Dorsolateral prefrontal cortex (tissue), 120 donors: ENCODE measurements at regions of chr21 and their contacts with region 1.

Region 1: DNA sequence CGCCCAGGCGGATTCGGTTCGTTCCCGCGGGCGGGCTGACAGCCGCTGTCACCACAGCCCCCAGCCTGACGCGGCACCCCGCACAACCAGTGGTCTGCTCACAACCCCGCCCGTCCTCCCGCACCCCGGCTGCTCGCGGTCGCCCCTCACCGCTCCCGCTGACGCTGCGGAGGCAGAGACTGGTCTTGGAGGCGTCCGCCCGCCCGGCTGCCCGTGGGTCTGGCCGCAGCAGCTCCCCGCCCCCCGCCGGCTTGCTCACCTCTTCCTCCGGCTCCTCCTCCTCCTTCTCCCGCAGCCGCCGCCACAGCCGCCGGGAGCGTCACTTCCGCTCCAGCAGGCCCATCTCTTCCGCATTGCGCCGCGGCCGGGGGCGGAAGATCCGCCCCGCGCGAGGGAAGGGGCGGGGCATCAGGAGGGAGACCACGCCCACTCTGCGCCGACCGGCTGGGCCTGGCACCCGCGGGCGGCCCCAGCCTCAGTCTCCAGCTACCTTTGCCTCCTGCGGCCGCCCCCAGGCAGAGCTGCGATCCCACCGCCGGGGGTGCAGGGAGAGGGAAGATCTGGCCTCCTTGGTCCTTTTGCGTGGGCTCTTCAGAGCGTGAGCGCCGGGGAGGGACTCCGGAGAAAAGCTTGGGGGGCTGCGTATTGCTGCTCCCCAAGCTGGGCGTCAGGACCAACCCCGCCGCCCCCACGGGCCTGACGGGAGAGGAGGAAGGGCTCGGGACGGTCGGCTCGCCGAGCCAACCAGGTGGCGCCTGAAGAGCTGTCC is at the start of gene SYNJ1:
- DNase-seq: peak; percentile 85 to 98 (median 93)
- H3K4me3 ChIP-seq: peak within 1 kb of the TSS; percentile 69 to 100 (median 96)
- H3K27ac ChIP-seq: peak within 1 kb of the TSS; percentile 63 to 98 (median 92)
- H3K27me3 ChIP-seq: no peaks in the 10 kb centered on the region
- CTCF ChIP-seq: peak in 21 of 56 donors; percentile 3 to 47 (median 20)
- total RNA-seq, gene SYNJ1: 60.7 to 224 (median 158) TPM

Region 2: DNA sequence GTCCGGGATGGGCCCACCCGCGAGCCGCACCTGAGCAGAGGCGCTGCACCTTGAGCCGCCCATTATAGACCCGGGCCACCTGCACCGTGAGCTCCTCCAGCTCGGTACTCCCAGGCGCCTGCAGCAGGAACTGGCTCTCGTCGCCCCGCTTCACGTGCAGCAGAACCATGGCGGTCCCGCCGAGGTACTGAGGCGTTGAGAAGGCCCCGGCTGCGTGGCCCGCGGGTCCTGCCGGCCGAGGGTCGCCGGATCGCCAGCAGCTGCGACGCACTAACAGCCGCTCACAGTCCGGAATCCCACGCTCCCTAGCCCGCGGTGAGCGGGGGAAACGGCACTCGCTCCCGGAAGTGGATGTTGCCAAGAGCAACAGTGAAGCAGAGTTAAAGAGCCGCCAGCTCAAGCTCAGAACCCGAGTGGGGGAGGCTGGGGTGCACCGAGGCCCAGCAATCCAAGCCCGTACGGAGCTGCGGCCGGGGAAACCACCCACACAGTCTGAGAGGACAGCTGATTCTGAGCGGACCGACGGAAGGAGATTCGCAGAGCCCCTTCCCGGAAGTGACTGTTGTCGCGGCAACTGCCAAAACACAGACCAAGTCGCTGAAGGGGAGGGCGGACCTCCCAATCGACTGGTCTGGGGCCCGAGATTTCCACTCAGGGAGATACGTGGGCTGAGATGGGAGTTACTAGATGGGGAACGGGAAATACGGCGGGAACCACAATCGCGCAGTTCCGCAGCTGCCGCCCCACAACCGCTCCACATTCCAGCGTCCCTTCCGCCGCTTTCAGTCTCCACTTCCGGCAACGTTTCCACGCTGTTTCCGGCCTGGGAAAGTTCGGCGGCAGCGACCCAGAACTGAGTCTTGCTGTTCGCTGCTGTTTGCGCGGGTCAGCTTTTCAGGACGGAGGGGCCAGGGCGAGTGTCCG is 115.5 kb before region 1 on chr21 and contains the start of gene CFAP298:
- intact Hi-C with region 1: loop called in 1 of 2 experiments (anchors 10 kb)
- DNase-seq: peak; percentile 75 to 94 (median 90)
- H3K4me3 ChIP-seq: peak within 1 kb of the TSS; percentile 64 to 99 (median 94)
- H3K27ac ChIP-seq: peak within 1 kb of the TSS; percentile 14 to 98 (median 90)
- H3K27me3 ChIP-seq: no peaks in the 10 kb centered on the region
- CTCF ChIP-seq: peak in 13 of 56 donors; percentile 3 to 39 (median 22)
- total RNA-seq, gene CFAP298: 25.7 to 54.3 (median 36.0) TPM

Region 3: DNA sequence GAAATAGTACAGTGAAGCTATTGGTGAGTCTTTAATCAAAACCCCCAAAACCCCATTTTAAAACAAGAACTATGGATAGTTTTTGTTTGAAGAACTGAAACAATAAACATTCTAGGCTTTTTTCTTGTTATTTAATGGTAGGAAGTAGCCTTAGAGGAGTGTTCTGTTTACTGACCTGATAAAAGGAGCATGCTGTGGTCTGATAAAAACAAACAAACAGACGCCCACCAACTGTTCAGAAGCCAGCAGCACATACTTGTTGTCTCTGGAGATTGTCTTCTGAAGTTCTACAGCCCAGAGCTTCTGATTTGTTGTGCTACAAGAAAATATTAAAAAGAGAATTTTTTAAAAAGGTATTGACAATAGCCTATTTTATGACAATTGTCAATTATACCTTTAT is 61.6 kb before region 1 on chr21:
- intact Hi-C with region 1: no loop called
- DNase-seq: no peak
- H3K4me3 ChIP-seq: no peak overlapping the region
- H3K27ac ChIP-seq: no peak overlapping the region
- H3K27me3 ChIP-seq: no peaks in the 10 kb centered on the region
- CTCF ChIP-seq: no peak